ENCODE measurements at regions of chr6 and their contacts with region 1.

Region 1: DNA sequence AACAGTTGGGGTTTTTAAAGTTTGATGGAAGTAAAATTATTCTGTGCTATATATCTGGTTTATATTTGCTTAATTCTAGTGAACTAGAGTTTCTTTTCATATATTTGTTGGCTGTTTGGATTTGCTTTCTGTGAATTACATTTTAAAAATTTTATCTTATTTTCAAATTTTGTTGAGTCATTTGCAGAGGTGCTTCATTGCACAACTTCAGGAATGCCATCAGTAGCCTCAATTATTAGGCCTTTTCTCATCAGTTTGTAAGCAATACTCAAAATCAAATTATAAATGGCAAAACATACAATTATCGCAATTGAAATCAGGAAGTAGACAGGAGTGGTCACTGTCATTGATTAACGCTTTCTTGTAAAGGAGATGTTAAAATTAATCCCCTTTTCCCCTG is 96.9 kb downstream of the UBE3D start:
- DNase-seq: no peak
- ATAC-seq: no peak

Region 2: GRCh38 chr6:82921258-82921657 is 47.5 kb before region 1 on chr6:
- intact Hi-C with region 1: loop called in 1 of 2 experiments (anchors 2 kb)
- DNase-seq: no peak
- ATAC-seq: no peak

Measured in left cardiac atrium (tissue), 4 donors.